CD8-positive, alpha-beta T cell (primary cell): ENCODE measurements at regions of chr10 and their contacts with region 1.

Region 1: GRCh38 chr10:43390759-43391158 is 18.2 kb downstream of the HNRNPF start:
- DNase-seq: peak in 4 of 9 experiments; percentile 29 to 72 (median 58)
- ATAC-seq: peak; percentile 73
- H3K4me3 ChIP-seq: no peak overlapping the region
- H3K4me3 Mint-ChIP-seq: no peak overlapping the region
- H3K27ac ChIP-seq: no peak overlapping the region
- H3K27ac Mint-ChIP-seq: peak overlapping the region; percentile 84
- H3K4me1 ChIP-seq: peaks cover 34% of the 10 kb centered on the region
- H3K4me1 Mint-ChIP-seq: peaks cover 77% of the 10 kb centered on the region
- H3K27me3 ChIP-seq: no peaks in the 10 kb centered on the region
- H3K27me3 Mint-ChIP-seq: no peaks in the 10 kb centered on the region
- CTCF ChIP-seq: peak; percentile 55

Region 2: DNA sequence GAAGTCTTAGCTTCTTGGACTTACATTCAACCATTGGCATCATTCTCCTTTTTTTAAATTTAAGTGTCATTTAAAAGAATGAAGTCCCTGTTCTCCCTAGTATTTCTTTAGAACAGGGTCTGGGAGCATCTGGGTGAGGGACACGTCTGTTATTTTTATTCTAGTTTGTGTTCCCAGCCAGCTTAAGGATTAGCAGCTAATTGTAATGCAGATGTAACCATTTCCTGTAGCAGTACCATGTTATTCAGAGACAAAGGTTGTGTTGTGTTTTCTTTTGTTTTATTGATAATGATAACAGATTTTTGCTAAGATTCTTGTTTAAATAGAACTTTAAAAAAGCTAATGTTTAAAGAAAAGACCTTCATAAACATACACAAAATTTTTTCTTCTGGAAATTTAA is 573.8 kb before region 1 on chr10:
- CTCF ChIA-PET with region 1: no interaction called
- POLR2A ChIA-PET with region 1: no interaction called
- intact Hi-C with region 1: no loop called
- DNase-seq: no peak
- ATAC-seq: no peak
- H3K4me3 ChIP-seq: no peak overlapping the region
- H3K4me3 Mint-ChIP-seq: no peak overlapping the region
- H3K27ac ChIP-seq: no peak overlapping the region
- H3K27ac Mint-ChIP-seq: no peak overlapping the region
- H3K4me1 ChIP-seq: no peaks in the 10 kb centered on the region
- H3K4me1 Mint-ChIP-seq: peaks cover 9% of the 10 kb centered on the region
- H3K27me3 ChIP-seq: no peaks in the 10 kb centered on the region
- H3K27me3 Mint-ChIP-seq: no peaks in the 10 kb centered on the region
- CTCF ChIP-seq: no peak

Region 3: GRCh38 chr10:43336641-43337318 is 54.0 kb before region 1 on chr10:
- CTCF ChIA-PET with region 1: no interaction called
- POLR2A ChIA-PET with region 1: no interaction called
- intact Hi-C with region 1: no loop called
- DNase-seq: no peak
- ATAC-seq: no peak
- H3K4me3 ChIP-seq: no peak overlapping the region
- H3K4me3 Mint-ChIP-seq: no peak overlapping the region
- H3K27ac ChIP-seq: no peak overlapping the region
- H3K27ac Mint-ChIP-seq: no peak overlapping the region
- H3K4me1 ChIP-seq: peaks cover 12% of the 10 kb centered on the region
- H3K4me1 Mint-ChIP-seq: peaks cover 14% of the 10 kb centered on the region
- H3K27me3 ChIP-seq: no peaks in the 10 kb centered on the region
- H3K27me3 Mint-ChIP-seq: peaks cover 17% of the 10 kb centered on the region
- CTCF ChIP-seq: no peak

Region 4: DNA sequence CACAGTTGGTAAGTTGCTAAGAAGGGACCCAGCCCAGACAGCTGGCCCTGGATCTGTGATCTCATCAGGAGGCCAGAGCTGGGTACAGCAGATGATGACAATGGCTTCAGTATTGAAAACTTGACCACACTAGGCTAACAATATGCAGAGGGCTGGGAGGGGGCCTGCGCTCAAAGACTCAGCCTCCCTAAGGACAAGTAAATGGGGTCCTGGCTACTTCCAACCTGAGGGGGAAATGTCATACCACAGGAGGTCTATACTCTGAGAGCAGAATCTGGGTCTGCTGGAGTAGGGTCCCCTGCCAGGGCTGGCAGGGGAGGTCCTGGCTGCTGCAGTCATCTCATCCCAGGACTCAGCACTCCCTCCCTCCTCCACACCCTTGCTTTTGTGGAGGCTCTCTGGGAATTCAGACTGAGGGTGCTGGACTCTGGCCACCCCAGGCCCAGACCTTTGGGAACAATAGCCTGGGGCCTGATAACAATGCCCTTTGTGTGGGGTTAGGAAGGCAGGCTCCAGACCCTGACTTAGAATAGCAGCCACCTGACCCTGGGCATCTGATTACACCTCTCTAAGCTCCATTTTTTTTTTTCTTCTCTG is 17.9 kb before region 1 on chr10:
- CTCF ChIA-PET with region 1: no interaction called
- POLR2A ChIA-PET with region 1: no interaction called
- intact Hi-C with region 1: no loop called
- DNase-seq: no peak
- ATAC-seq: no peak
- H3K4me3 ChIP-seq: no peak overlapping the region
- H3K4me3 Mint-ChIP-seq: no peak overlapping the region
- H3K27ac ChIP-seq: no peak overlapping the region
- H3K27ac Mint-ChIP-seq: no peak overlapping the region
- H3K4me1 ChIP-seq: no peaks in the 10 kb centered on the region
- H3K4me1 Mint-ChIP-seq: peaks cover 11% of the 10 kb centered on the region
- H3K27me3 ChIP-seq: no peaks in the 10 kb centered on the region
- H3K27me3 Mint-ChIP-seq: no peaks in the 10 kb centered on the region
- CTCF ChIP-seq: no peak

Region 5: DNA sequence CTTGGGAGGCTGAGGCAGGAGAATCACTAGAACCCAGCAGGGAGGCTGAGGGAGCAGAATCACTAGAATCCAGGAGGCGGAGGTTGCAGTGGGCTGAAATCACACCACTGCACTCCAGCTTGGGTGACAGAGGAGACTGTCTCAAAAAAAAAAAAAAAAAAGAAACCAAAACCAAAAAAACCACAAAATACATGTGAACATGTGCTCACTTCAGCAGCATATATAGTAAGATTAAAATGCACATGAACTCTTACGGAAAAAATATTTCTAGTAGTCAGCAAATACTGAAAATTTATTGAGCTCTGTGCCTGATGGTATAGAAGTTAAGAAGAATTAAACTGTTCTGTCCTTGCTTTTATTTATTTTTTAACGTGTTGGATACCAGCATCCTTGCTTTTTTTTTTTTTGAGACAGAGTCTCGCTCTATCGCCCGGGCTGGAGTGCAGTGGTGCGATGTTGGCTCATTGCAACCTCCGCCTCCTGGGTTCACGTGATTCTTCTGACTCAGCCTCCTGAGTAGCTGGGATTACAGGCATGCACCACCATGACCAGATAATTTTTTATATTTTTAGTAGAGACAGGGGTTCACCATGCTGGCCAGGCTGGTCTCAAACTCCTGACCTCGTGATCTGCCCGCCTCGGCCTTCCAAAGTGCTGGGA is 36.5 kb after region 1 on chr10:
- CTCF ChIA-PET with region 1: interaction called, 3 read pairs
- POLR2A ChIA-PET with region 1: no interaction called
- intact Hi-C with region 1: loop called in 1 of 2 experiments (anchors 1 kb)
- DNase-seq: peak in 3 of 9 experiments; percentile 19 to 51 (median 40)
- ATAC-seq: peak; percentile 79
- H3K4me3 ChIP-seq: no peak overlapping the region
- H3K4me3 Mint-ChIP-seq: peak overlapping the region; percentile 51
- H3K27ac ChIP-seq: no peak overlapping the region
- H3K27ac Mint-ChIP-seq: peak overlapping the region; percentile 69
- H3K4me1 ChIP-seq: peaks cover 17% of the 10 kb centered on the region
- H3K4me1 Mint-ChIP-seq: peaks cover 9% of the 10 kb centered on the region
- H3K27me3 ChIP-seq: no peaks in the 10 kb centered on the region
- H3K27me3 Mint-ChIP-seq: no peaks in the 10 kb centered on the region
- CTCF ChIP-seq: no peak